Activated B cell treated with CpG ODN at 0.5 μM for 24 hours (primary cell): ENCODE measurements at regions of chr17 and their contacts with region 1.

Region 1: DNA sequence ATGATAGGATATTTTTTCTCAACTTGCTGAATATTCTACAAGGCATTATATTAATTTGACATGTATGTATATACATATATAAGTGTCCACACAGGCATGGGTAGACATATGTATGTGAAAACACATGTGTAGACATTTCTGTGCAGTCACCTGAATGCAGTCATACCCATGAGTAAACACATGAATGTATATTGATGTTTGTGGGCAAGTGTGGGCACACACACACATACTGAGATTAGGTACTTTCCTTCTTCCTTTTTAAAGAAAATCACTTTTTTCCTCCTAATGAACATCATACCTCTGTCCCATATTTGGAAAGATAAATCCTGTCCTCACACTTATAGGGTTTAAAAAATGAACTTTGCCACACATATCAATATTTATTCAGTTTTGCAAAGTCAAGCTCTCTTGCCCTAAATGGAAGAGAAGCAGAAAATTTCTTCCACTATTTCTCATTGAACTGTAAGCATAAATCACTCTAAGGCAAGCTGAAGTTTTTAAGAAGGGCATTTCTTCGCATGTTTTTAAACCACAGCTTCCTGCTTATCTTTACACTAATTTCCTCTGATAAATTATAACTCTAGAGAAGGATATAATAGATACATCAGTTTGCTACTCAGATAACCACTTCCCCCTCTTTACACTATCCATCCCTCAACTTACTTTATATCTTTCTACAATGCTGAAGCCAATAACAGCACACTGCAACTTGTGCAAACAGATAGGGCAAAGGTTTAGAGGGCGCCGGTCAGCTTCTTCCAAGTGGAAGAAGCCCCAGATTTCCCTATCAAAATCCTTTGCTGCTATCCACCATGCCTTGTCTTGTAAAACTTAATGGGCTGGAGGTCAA is 49.6 kb upstream of the LRRC37A3 start:
- DNase-seq: no peak
- ATAC-seq: no peak
- H3K4me3 Mint-ChIP-seq: peak overlapping the region; percentile 38
- H3K27ac Mint-ChIP-seq: peak overlapping the region; percentile 76
- H3K4me1 Mint-ChIP-seq: peaks cover 85% of the 10 kb centered on the region
- H3K27me3 Mint-ChIP-seq: no peaks in the 10 kb centered on the region
- CTCF ChIP-seq: no peak

Region 2: DNA sequence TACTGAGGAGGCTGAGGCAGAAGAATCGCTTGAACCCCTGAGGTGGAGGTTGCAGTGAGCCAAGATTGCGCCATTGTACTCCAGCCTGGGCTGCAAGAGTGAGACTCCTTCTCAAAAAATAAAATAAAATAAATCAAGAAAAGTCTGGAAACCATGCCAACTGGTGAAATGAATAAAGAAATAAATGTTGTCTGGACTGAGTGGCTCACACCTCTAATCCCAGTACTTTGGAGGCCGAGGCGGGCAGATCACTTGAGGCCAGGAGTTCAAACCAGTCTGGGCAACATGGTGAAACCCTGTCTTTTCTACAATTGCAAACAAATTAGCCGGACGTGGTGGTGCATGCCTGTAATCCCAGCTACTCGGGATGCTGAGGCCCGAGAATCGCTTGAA is 48.9 kb before region 1 on chr17:
- CTCF ChIA-PET with region 1: no interaction called
- POLR2A ChIA-PET with region 1: interaction called, 10 read pairs
- intact Hi-C with region 1: loop called (anchors 2 kb)
- DNase-seq: no peak
- ATAC-seq: no peak
- H3K4me3 Mint-ChIP-seq: peak overlapping the region; percentile 87
- H3K27ac Mint-ChIP-seq: peak overlapping the region; percentile 92
- H3K4me1 Mint-ChIP-seq: peaks cover 47% of the 10 kb centered on the region
- H3K27me3 Mint-ChIP-seq: no peaks in the 10 kb centered on the region
- CTCF ChIP-seq: no peak

Region 3: GRCh38 chr17:64984851-64985521 is 16.1 kb after region 1 on chr17:
- CTCF ChIA-PET with region 1: interaction called, 3 read pairs
- POLR2A ChIA-PET with region 1: interaction called, 130 read pairs
- intact Hi-C with region 1: loop called (anchors 1 kb)
- DNase-seq: no peak
- ATAC-seq: no peak
- H3K4me3 Mint-ChIP-seq: peak overlapping the region; percentile 81
- H3K27ac Mint-ChIP-seq: peak overlapping the region; percentile 99
- H3K4me1 Mint-ChIP-seq: peaks cover 64% of the 10 kb centered on the region
- H3K27me3 Mint-ChIP-seq: no peaks in the 10 kb centered on the region
- CTCF ChIP-seq: no peak

Region 4: DNA sequence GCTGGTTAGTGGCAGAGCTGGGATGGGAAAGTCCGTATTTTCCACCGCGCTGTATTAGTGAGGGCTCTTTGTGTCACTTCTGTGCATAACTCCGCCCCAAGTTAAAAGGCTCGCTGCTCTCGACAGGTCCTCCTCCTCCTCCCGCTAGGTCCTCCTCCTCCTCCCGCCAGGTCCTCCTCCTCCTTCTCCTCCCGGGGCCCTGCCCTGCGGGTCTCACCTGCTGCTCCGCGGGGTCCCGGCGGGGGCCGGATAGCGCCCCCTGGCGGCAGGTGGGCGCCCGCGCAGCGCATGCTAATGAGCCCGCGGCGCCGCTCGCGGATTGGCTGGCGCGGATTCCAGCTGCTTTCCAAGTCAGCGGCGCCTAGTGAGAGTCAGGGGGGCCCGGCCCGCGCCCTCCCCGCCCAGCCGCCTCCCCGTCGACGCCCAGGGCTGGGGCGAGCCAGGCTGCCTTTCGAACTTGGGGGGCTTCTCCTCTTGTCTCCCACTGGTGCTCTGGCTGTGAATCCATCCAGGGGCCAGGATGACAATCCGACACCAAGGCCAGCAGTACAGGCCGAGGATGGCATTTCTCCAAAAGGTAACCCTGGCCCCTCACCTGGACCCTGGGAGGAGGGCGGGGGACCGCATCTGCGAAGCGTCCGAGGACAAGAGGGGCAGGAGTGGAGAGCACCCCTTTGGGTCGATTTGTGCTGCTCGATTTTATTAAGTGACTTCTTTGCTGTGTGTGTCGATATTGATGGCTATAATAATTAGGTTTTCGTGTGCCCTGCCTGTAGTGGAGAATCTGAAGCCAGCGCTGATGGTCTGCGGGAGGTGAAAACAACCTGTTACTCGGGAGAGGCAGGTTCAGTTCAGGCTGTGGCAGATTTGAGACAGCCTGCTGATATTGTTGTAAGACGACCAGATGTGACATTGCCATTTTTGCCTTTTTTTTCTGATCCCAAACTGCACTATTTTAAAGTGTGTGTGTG is 168.4 kb after region 1 on chr17 and contains the start of gene RGS9:
- CTCF ChIA-PET with region 1: interaction called, 3 read pairs
- POLR2A ChIA-PET with region 1: no interaction called
- intact Hi-C with region 1: loop called (anchors 1 kb)
- DNase-seq: peak; percentile 84
- ATAC-seq: peak; percentile 91
- H3K4me3 Mint-ChIP-seq: peak within 1 kb of the TSS; percentile 81
- H3K27ac Mint-ChIP-seq: peak within 1 kb of the TSS; percentile 65
- H3K4me1 Mint-ChIP-seq: peaks cover 20% of the 10 kb centered on the region
- H3K27me3 Mint-ChIP-seq: peaks cover 9% of the 10 kb centered on the region
- CTCF ChIP-seq: no peak
- total RNA-seq, gene RGS9: 3.2 TPM in 2 replicates

Region 5: GRCh38 chr17:66165513-66166123 is 1196.7 kb after region 1 on chr17:
- CTCF ChIA-PET with region 1: no interaction called
- POLR2A ChIA-PET with region 1: no interaction called
- intact Hi-C with region 1: loop called (anchors 10 kb)
- DNase-seq: no peak
- ATAC-seq: no peak
- H3K4me3 Mint-ChIP-seq: no peak overlapping the region
- H3K27ac Mint-ChIP-seq: no peak overlapping the region
- H3K4me1 Mint-ChIP-seq: no peaks in the 10 kb centered on the region
- H3K27me3 Mint-ChIP-seq: no peaks in the 10 kb centered on the region
- CTCF ChIP-seq: peak; percentile 84